AG04450 (cell line): ENCODE measurements at regions of chr2 and their contacts with region 1.

Region 1: DNA sequence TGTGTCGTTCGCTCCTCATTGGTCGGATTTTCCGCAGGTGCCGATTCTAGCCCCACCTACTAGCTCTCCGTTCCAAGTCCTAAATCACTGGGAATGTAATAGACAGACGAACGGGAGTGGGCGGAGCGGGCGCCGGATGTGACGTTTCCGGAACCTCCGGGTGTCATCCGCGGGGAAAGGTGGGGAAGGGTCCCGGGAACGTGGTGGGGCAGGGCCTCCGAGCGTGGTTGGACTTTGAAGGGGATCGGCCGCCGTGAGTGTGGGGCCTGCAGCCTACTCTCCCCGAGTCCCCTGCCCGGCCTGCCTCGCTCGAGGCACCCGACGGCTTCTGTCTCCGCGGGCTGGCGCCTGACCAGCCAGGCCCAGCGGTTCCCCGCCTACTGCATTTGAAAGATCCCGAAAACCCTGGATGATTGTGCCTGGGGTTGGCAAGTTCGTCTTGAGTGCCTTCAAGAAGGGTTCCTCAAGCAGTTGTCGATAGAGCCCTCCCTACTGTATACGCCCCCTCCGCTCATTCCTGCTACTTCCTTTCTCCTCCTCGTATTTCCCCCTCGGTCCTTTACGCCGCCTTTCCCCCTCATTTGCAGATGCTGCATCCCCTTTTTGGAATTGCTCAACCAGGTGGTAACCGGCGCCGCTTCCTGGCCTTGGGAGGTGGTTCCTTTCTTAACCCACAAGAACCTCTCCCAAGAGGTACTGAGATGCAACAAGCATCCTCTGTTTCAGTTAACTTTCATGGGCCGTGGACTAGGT is at the start of gene STAMBP:
- DNase-seq: peak; percentile 87
- H3K4me3 ChIP-seq: peak within 1 kb of the TSS; percentile 77
- H3K27ac ChIP-seq: peak within 1 kb of the TSS; percentile 95
- H3K27me3 ChIP-seq: no peaks in the 10 kb centered on the region
- CTCF ChIP-seq: no peak
- polyA plus RNA-seq, gene STAMBP: 48.3 and 54.5 TPM in 2 replicates

Region 2: DNA sequence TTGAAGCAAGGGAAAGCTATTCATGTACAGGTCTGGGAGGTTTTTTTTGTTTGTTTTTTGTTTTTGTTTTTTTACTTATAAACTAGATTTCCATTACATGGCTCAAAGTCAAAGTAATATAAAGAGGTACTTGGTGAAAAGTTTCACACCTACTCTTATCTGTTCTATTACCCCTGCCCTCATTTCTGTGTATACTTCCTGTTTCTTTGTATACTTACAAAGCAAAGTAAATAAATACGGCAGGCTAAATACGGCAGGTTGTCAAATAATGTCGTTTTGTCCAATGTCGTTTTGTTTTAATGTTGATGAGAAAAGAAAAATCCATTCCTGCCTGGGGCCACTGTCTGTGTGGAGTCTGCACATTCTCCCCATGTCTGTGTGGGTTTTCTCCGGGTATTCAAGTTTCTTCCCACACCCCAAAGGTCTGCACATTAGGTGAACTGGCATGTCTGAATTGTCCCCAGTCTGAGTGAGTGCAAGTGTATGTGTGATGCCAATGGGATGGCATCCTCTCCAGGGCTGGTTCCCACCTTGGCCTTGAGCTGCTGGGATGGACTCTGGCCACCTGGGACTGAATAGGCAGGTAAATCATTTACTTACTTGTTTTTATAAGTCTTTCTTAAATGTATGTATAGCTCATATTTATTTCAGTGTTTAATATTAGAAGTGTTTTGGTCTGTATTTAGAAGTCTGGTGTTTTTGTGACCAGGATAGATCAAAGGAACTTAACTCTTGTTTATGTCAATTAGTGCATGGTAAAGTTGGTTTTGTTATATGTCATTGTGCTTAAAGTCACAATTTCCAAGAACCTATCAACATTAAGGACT is 13.1 kb after region 1 on chr2:
- CTCF ChIA-PET with region 1: interaction called, 10 read pairs
- POLR2A ChIA-PET with region 1: no interaction called
- DNase-seq: no peak
- H3K4me3 ChIP-seq: no peak overlapping the region
- H3K27ac ChIP-seq: no peak overlapping the region
- H3K27me3 ChIP-seq: no peaks in the 10 kb centered on the region
- CTCF ChIP-seq: no peak

Region 3: GRCh38 chr2:73910873-73911547 is 82.0 kb after region 1 on chr2:
- CTCF ChIA-PET with region 1: interaction called, 13 read pairs
- POLR2A ChIA-PET with region 1: interaction called, 5 read pairs
- DNase-seq: no peak
- H3K4me3 ChIP-seq: no peak overlapping the region
- H3K27ac ChIP-seq: no peak overlapping the region
- H3K27me3 ChIP-seq: no peaks in the 10 kb centered on the region
- CTCF ChIP-seq: no peak

Region 4: DNA sequence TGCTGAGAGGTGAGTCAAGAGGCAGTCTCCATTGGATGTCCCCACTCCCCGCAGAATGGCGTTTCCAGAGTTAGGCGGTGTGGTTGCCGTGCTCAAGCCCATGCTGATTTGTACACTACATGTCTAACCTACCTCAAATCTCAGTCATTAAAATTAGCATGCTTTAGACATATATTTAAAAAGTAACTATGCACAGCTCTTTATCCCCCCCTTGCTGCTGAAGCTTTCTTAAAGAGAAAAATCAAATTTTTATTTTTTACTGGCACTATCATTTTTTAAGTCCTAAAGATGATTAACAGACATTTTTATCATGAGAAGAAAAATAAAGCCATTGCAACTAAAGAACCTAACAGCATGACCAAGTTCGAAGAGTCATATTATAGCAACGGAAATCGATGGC is 275.8 kb after region 1 on chr2:
- CTCF ChIA-PET with region 1: interaction called, 16 read pairs
- POLR2A ChIA-PET with region 1: no interaction called
- DNase-seq: no peak
- H3K4me3 ChIP-seq: no peak overlapping the region
- H3K27ac ChIP-seq: no peak overlapping the region
- H3K27me3 ChIP-seq: no peaks in the 10 kb centered on the region
- CTCF ChIP-seq: peak; percentile 33

Region 5: DNA sequence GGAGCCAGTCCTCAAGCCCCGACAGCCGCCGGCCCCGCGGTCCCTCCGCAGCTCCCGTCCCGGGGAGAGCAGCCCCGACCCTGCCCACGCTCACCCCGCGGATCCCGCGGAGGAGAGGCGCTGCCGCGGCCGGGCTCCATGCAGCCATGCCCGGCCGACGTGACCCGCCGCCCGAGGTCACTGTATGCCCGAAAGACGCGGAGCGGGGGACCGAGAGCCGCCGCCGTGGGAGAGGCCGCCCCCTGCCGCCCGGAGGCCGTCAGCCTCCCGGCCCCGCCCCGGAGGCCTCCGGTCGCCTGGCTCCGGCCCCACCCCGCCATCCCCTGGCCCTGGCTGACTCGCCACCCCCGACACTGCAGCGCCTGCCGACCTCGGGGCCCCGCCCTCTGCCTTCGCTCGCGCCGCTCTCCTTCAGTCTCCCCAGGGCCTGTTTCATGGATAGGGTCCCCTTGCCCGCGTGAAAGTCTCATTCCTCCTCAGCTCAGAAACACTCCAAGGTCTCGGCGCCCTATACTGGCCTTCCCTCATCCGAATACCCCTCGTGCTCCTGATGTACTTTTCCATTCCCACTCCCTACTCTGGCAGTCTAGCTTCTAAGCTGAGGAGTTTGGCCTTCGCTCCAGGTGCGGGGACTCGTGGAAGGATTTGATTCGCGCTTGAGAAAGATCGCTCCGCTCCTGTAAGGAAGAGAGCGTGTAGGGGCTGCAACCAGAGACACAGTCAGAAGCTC is 318.9 kb after region 1 on chr2 and contains the start of gene BOLA3:
- CTCF ChIA-PET with region 1: interaction called, 34 read pairs
- POLR2A ChIA-PET with region 1: interaction called, 3 read pairs
- DNase-seq: no peak
- H3K4me3 ChIP-seq: peak within 1 kb of the TSS; percentile 77
- H3K27ac ChIP-seq: peak within 1 kb of the TSS; percentile 39
- H3K27me3 ChIP-seq: no peaks in the 10 kb centered on the region
- CTCF ChIP-seq: peak; percentile 49
- polyA plus RNA-seq, gene BOLA3: 28.1 and 38.6 TPM in 2 replicates

Region 6: GRCh38 chr2:74250189-74250631 is 421.2 kb after region 1 on chr2:
- CTCF ChIA-PET with region 1: interaction called, 10 read pairs
- POLR2A ChIA-PET with region 1: no interaction called
- DNase-seq: no peak
- H3K4me3 ChIP-seq: no peak overlapping the region
- H3K27ac ChIP-seq: no peak overlapping the region
- H3K27me3 ChIP-seq: peaks cover 21% of the 10 kb centered on the region
- CTCF ChIP-seq: peak; percentile 77

Region 7: DNA sequence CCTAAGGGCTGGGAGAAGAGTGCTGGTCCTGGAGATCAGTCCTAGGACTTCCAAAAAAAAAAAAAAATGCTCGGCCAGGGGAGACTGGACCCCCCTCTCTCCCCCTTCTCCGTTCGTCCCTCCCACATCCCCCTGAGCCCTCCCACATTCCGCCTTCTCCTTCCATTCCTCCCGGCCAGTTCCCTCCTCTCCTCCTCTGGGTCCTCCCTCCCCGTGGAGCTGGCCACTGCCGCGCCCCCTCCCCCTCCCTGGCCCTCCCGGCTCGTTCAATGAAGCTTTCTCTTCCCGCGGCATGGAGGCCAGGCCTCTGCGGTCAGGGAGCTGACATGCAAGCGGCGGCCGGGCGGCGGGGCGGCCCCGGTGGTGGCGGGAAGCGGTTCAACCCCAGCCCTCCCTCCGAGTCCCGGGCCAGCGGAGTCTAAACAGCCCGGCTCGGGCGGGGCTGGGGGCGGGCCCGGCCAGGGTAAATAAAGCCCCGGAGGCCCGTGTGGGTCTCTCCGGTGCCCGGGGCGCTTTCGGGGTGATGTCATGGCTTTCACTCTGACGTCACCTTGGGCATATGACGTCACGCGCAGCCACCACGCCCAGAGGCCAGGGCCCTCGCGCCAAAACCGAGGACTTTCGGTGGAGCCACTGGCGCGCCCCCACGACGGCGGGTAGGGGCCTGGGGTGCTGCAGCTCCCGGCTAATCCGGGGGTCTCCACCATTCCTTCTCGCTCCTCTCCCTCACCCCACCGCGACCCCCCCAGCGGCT is 725.1 kb after region 1 on chr2 and contains the start of gene LOXL3:
- CTCF ChIA-PET with region 1: no interaction called
- POLR2A ChIA-PET with region 1: no interaction called
- DNase-seq: peak; percentile 83
- H3K4me3 ChIP-seq: peak within 1 kb of the TSS; percentile 97
- H3K27ac ChIP-seq: peak within 1 kb of the TSS; percentile 91
- H3K27me3 ChIP-seq: no peaks in the 10 kb centered on the region
- CTCF ChIP-seq: no peak
- polyA plus RNA-seq, gene LOXL3: 41.1 and 46.2 TPM in 2 replicates